IMR-90 (cell line): ENCODE measurements at regions of chr5 and their contacts with region 1.

Region 1: DNA sequence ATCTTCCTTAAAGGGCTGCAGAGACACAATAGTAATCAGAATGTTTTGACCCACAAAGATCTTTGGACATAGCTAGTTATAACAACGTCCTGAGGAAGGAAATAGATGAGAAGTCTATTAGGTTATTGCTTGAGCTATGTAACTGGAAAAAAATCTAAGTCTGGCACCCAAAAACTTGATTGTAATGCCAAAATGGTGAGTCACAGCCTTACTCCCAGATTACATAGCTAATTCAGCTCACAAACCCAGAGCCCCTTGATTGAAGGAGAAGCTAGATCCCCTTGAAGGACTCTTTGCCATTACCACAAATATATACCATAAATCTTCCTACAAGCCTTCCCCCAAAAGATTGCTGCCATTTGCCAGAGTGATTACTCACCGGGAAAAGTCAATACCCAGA is 341.8 kb upstream of the KIF2A start:
- DNase-seq: peak; percentile 15
- ATAC-seq: no peak
- H3K4me3 ChIP-seq: no peak overlapping the region
- H3K27ac ChIP-seq: no peak overlapping the region
- H3K4me1 ChIP-seq: no peaks in the 10 kb centered on the region
- H3K27me3 ChIP-seq: no peaks in the 10 kb centered on the region
- CTCF ChIP-seq: no peak
- POLR2A ChIP-seq: no peak
- RAD21 ChIP-seq: no peak

Region 2: GRCh38 chr5:61910771-61911170 is 53.4 kb before region 1 on chr5:
- CTCF ChIA-PET with region 1: no interaction called
- POLR2A ChIA-PET with region 1: no interaction called
- dilution Hi-C with region 1: no loop called
- in situ Hi-C with region 1: no loop called
- intact Hi-C with region 1: no loop called
- DNase-seq: no peak
- ATAC-seq: no peak
- H3K4me3 ChIP-seq: no peak overlapping the region
- H3K27ac ChIP-seq: no peak overlapping the region
- H3K4me1 ChIP-seq: no peaks in the 10 kb centered on the region
- H3K27me3 ChIP-seq: no peaks in the 10 kb centered on the region
- CTCF ChIP-seq: no peak
- POLR2A ChIP-seq: no peak
- RAD21 ChIP-seq: no peak

Region 3: GRCh38 chr5:62065050-62065449 is 100.8 kb after region 1 on chr5:
- CTCF ChIA-PET with region 1: no interaction called
- POLR2A ChIA-PET with region 1: no interaction called
- dilution Hi-C with region 1: no loop called
- in situ Hi-C with region 1: no loop called
- intact Hi-C with region 1: loop called (anchors 1 kb)
- DNase-seq: no peak
- ATAC-seq: no peak
- H3K4me3 ChIP-seq: no peak overlapping the region
- H3K27ac ChIP-seq: no peak overlapping the region
- H3K4me1 ChIP-seq: no peaks in the 10 kb centered on the region
- H3K27me3 ChIP-seq: no peaks in the 10 kb centered on the region
- CTCF ChIP-seq: no peak
- POLR2A ChIP-seq: no peak
- RAD21 ChIP-seq: no peak